ENCODE measurements at regions of chr4 and their contacts with region 1.

Region 1: GRCh38 chr4:39689970-39690369 is 8.0 kb upstream of the UBE2K start:
- DNase-seq: no peak
- H3K4me3 ChIP-seq: no peak overlapping the region
- H3K27ac ChIP-seq: no peak overlapping the region
- H3K4me1 ChIP-seq: no peaks in the 10 kb centered on the region
- H3K27me3 ChIP-seq: no peaks in the 10 kb centered on the region
- CTCF ChIP-seq: no peak

Region 2: GRCh38 chr4:38930204-38930603 is 759.8 kb before region 1 on chr4:
- CTCF ChIA-PET with region 1: no interaction called
- POLR2A ChIA-PET with region 1: no interaction called
- intact Hi-C with region 1: no loop called
- DNase-seq: no peak
- H3K4me3 ChIP-seq: no peak overlapping the region
- H3K27ac ChIP-seq: no peak overlapping the region
- H3K4me1 ChIP-seq: peaks cover 3% of the 10 kb centered on the region
- H3K27me3 ChIP-seq: no peaks in the 10 kb centered on the region
- CTCF ChIP-seq: no peak

Region 3: DNA sequence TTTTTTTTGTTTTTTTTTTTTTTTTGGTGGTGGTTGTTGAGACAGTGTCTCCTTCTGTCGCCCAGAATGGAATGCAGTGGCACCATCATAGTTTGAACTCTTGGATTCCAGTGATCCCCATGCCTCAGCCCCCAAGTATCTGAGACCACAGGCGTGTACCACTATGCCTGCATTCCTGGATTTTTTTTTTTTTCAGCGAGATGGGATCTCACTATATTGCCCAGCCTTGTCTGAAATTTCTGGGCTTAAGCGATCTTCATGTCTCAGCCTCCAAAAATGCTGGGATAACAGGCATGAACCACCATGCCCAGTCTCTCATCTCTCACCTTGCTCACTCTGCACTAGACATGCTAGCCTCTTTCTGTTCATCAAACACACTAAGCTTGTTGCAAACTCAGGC is 112.0 kb after region 1 on chr4:
- CTCF ChIA-PET with region 1: no interaction called
- POLR2A ChIA-PET with region 1: interaction called, 10 read pairs
- intact Hi-C with region 1: no loop called
- DNase-seq: no peak
- H3K4me3 ChIP-seq: no peak overlapping the region
- H3K27ac ChIP-seq: no peak overlapping the region
- H3K4me1 ChIP-seq: no peaks in the 10 kb centered on the region
- H3K27me3 ChIP-seq: no peaks in the 10 kb centered on the region
- CTCF ChIP-seq: no peak